Calu3 (cell line): ENCODE measurements at regions of chr6 and their contacts with region 1.

Region 1: DNA sequence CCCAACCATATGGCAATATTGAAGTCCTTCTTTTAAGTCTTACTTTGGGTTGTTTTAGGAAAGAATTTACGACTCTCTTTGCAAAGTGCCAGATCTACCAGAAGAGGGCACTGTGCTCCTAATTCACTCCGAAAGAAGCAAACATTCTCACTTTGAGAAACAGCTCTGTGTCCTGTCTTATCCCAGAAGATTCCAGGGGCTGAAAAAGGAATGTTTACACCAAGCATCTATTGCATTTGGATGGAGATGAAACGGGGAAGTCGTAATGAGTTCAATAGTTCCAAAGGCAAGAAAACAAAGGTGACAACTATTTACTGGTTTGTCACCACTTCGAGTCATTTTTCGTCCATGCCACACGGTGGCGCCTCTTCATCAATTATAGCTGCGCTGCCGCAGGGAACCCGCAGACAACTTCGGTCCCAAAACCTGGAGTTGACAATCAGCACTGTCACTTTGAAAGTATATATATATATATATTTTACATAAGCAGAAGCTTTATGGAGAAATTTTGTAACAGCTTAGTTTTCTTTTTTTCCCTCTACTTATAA is 121.6 kb downstream of the MOXD1 start:
- DNase-seq: peak; percentile 79
- H3K4me3 Mint-ChIP-seq: peak overlapping the region; percentile 71
- H3K27ac Mint-ChIP-seq: no peak overlapping the region
- H3K4me1 Mint-ChIP-seq: peaks cover 11% of the 10 kb centered on the region
- H3K27me3 Mint-ChIP-seq: no peaks in the 10 kb centered on the region
- CTCF ChIP-seq: peak; percentile 89

Region 2: DNA sequence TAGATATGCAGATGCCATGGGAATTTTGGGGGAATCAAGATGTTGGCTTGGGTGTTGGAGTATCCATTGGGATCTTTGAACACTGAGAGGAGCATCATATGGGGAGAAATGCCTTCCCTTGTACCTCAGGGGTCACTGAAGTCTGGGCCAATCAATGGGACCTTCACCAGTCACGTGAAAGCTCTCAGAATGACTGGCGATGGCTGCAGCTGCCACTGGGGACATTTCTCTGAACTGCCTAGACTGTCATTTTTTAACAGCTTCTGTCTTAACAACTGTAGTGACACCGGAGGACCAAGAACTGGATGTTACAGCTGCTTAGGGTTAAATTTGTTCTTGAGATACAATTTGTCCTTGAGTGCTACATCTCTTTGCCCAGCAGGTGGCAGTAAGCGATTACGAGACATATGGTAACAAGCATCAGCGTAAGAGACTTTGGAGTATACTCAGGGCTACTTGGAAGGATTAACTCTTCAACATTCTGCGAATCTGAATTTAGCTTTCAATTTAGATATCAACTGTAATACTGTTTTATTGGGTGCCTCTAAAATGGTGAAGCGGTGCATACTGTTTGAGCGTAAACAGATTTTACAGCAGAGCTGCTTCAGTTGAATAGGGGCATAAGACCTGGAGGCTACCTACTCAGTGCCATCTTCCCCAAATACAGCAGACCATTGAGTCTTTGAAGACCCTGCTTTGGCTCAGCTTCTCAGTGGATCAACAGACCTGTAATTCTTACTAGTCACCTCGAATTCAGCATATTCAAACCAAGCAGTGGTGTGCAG is 364.5 kb before region 1 on chr6:
- CTCF ChIA-PET with region 1: interaction called, 13 read pairs
- intact Hi-C with region 1: no loop called
- DNase-seq: peak; percentile 64
- H3K4me3 Mint-ChIP-seq: no peak overlapping the region
- H3K27ac Mint-ChIP-seq: no peak overlapping the region
- H3K4me1 Mint-ChIP-seq: peaks cover 7% of the 10 kb centered on the region
- H3K27me3 Mint-ChIP-seq: peaks cover 11% of the 10 kb centered on the region
- CTCF ChIP-seq: peak; percentile 66

Region 3: DNA sequence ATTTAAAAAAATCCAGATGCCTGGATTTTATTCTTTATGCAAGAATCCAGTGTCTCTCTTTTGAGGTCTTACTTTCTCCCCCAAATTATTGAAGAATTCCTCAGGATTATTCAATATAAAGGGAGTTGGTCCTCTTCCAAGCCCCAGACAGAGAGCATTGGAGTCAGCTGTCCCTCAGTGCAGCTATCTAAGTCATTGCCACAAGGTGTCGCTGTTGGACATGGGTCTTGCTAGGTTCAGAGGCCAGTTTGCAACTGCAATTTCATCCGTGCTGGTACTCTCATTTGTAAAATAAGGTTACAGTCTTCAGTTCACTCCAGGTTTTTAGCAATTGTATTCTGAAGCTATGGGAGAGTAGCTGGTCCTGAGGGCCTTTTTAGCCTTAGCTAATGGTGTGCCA is 356.3 kb before region 1 on chr6:
- CTCF ChIA-PET with region 1: interaction called, 11 read pairs
- intact Hi-C with region 1: no loop called
- DNase-seq: peak; percentile 61
- H3K4me3 Mint-ChIP-seq: no peak overlapping the region
- H3K27ac Mint-ChIP-seq: no peak overlapping the region
- H3K4me1 Mint-ChIP-seq: no peaks in the 10 kb centered on the region
- H3K27me3 Mint-ChIP-seq: no peaks in the 10 kb centered on the region
- CTCF ChIP-seq: peak; percentile 62

Region 4: DNA sequence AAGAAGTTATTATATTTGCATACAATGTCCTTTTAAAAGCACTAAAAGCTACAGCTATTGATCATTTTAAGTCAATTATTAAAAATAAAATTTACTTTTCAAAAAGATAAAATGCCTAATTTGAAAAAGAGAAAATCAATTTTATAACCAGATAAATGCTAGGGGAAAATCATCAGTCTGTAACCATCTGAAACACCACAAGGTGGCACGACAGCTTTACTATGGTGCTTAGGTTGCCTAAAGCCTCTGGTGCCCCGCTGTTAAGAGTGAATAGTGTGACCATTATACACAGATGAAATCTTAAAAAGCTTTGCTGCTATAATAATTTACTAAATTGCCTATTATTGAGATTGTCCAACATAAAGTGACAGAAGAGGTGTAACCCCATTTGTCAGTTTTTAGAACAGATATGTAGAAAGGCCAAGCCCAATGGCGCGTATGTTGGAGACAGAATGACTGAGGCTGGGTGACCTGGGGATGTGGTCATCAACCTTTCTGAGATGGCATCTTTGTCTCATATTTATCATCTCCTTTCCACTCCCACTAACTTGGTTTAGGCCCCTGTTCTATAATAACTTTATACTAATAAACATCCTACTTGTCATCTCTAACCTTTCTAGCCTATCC is 20.8 kb after region 1 on chr6:
- CTCF ChIA-PET with region 1: interaction called, 49 read pairs
- intact Hi-C with region 1: loop called (anchors 1 kb)
- DNase-seq: peak; percentile 58
- H3K4me3 Mint-ChIP-seq: no peak overlapping the region
- H3K27ac Mint-ChIP-seq: no peak overlapping the region
- H3K4me1 Mint-ChIP-seq: no peaks in the 10 kb centered on the region
- H3K27me3 Mint-ChIP-seq: no peaks in the 10 kb centered on the region
- CTCF ChIP-seq: peak; percentile 57

Region 5: DNA sequence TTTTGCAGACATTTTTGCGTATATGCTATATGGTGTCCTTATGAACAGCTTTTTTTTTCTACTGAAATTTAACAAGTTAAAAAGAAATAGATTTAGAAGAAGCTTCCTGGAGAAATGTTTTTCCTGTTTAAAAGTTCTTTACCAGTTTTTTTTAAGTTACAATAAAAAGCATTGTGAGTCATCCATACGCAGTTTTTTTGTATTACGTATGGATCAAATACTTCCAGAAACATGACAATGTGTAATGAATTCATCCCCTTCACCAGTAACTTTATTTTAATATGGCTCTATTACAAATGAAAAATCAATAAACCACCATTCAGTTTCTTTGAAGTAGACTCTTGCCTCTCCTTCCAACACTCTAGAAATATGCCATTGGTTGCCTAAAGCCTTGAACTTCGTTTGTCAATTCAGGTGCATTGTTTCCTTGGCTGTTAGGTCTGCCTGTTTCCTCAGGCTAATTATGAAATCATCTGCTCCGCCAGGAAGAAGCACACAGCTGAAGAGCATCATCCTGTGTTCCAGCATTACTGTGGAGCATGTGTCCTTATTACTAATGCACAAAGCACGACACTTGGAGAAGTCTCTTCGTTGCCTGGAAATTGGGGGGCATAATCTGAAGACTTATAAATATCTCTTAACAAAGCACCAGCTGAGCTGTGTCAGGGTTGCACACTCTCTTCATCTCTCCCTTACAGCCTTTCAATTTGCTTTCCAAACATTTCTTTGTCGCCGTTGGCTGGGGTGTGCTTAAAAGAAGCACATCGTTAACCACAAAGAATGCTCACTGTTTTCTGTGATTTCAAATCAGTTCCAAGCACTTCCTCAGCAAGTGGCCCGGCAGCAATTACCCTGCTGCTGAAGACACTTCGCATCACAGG is 112.0 kb after region 1 on chr6:
- CTCF ChIA-PET with region 1: interaction called, 12 read pairs
- intact Hi-C with region 1: no loop called
- DNase-seq: no peak
- H3K4me3 Mint-ChIP-seq: no peak overlapping the region
- H3K27ac Mint-ChIP-seq: no peak overlapping the region
- H3K4me1 Mint-ChIP-seq: peaks cover 26% of the 10 kb centered on the region
- H3K27me3 Mint-ChIP-seq: no peaks in the 10 kb centered on the region
- CTCF ChIP-seq: no peak

Region 6: DNA sequence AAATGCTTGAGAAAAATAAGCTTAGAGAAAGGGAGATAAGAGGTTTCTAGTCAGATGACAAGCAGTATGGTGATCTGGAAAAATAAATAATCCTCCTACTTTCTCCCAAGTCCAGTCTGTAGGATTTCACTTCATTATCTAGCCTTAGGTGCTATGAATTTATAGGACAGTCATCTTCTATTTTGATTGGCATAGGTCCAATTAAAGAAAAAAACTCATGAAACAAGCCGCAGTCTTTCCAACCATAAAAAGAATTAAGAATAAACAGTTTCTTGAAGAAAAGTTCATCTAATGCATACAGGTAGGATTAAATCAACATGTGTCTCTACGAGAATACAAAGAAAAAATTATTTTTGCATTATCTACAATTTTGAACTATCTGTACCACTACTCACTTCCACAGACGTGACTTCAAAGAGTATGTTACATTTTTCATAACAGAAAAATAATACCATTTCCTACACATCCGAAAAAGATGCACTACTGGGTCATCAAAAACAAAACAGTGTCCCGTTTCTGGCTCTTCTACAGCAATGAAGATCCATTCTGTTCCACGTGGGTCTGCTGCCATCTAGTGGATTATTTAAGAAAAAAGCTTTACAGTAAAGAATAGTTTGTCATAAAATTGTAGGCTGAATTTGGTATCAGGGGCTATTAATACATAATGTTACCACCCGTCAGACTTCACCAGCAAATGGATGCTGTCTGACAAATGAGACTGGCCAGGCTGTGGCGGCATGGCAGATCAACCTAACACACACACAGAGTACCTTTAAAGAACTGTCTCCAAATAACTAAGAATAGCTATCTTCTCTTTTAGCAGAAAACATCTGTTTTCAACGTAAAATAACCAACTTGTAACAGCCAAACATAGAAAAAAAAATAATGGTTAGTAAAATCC is 204.4 kb after region 1 on chr6:
- CTCF ChIA-PET with region 1: interaction called, 9 read pairs
- intact Hi-C with region 1: loop called (anchors 1 kb)
- DNase-seq: peak; percentile 46
- H3K4me3 Mint-ChIP-seq: no peak overlapping the region
- H3K27ac Mint-ChIP-seq: no peak overlapping the region
- H3K4me1 Mint-ChIP-seq: no peaks in the 10 kb centered on the region
- H3K27me3 Mint-ChIP-seq: no peaks in the 10 kb centered on the region
- CTCF ChIP-seq: peak; percentile 74